ENCODE measurements at regions of chr10 and their contacts with region 1.

Region 1: DNA sequence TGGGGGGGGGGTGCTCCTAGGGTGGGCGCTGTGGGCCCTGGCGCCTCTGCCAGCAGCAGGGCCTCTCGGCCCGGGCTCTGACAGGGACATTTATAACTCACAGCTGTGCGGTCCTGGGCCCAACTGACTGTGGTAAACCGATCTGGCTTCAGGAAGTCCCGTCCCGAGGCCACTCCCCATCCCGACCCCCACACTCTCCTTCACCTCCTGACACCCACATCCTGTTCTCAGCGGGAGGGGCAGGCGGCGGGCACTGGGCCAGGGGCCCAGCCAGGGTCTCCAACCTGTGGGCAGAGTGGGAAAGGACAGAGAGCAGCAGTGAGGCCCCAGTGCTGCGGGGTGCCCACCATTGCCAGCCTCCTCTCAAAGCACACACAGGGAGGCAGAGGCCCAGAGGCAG is 69.1 kb downstream of the ZMIZ1 start:
- DNase-seq: peak; percentile 86 to 98 (median 97)
- H3K4me3 ChIP-seq: peak overlapping the region in 4 of 7 experiments; percentile 50 to 68 (median 58)
- H3K27ac ChIP-seq: peak overlapping the region; percentile 85 to 90
- H3K4me1 ChIP-seq: peaks cover 21 to 100% (median 99%) of the 10 kb centered on the region in 4 experiments
- H3K27me3 ChIP-seq: no peaks in the 10 kb centered on the region

Region 2: DNA sequence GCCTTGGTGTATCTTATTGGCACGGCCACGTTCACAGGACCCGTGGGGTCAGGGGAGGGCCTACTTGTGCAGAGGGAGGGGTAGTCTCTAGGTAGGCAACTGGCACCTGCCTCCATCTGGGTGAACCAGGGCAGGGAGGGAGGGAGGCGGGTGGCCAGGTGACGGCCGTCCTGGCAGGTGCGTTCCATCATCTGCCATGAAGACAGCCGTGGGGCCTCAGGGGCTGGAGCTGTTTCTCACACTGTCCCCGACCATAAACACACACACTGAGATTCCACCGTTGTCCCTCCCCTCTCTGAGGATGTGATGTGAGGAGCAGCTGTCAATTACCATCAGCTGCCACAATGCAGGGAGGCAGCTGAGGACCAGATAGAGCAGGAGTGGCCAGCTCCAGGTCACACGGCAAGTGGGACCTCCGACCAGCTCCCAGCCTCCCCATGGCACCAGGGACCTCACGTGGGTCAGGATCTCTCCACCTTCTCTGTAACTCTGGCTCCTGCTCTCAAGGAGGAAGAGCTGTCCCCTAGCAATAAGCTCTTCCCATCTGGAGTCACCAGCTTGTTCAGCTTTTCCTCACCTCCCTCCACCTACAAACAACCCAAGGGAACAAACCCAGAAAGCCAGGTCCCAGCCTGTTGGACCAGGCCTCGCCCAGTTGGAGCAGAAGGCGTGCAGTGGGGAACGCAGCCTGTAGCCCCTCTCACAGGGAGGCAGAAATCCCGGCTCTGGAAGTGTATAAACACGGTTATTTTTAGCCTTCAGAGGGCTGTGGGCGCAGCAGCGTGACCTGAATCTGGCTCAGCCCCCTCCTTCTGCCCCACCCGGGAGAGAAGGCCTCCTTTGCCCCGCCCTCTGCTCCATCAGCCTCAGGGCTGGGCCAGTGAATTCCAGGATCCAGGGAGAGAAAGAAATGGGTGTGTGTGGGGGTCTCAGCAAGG is 36.0 kb before region 1 on chr10:
- CTCF ChIA-PET with region 1: interaction called, 10 read pairs
- POLR2A ChIA-PET with region 1: interaction called, 3 read pairs
- DNase-seq: peak in 2 of 3 donors; percentile 48 to 61
- H3K4me3 ChIP-seq: peak overlapping the region in 3 of 7 experiments; percentile 38 to 47 (median 38)
- H3K27ac ChIP-seq: peak overlapping the region; percentile 28 to 74
- H3K4me1 ChIP-seq: peaks cover 14 to 100% (median 99%) of the 10 kb centered on the region in 4 experiments
- H3K27me3 ChIP-seq: no peaks in the 10 kb centered on the region

Region 3: DNA sequence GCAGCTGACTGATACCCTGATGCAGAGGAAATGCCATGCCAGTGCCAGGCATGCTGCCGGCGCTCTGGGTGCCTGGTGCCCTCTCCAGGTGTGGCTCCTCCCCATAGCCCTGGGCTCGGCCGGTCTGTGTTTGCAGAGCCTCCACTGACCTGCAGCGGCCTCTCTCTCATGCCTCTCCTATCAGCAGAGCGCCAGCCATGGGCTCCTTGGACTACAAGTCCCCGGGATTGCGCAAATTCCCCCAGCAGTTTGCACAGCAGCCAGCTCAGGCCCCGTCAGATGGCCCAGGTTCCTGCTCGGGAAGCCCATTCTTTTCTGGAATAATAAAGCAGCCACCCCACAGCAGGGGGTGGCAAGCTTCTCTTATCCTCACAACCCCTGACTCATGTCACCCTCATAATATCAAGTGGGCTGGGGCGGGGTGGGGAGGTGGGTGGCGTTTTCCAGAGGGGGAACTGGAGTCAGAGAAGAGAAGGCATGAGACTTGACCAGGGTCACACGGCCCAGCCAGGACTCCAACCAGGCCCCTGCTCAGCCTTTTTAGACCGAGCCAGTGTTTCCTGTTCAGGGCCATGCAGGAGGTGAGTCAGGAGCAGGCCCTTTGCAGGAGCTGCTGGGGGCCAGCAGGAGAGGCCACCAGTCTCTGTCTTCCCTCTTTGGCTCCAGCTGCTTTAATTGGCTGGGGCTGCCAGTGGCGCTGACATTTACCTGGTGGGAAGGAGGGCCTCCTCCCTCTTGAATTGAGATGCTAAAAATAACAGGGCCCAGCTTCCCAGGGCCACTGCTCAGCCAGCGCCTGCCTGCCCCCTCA is 10.5 kb before region 1 on chr10:
- CTCF ChIA-PET with region 1: interaction called, 39 read pairs
- POLR2A ChIA-PET with region 1: interaction called, 5 read pairs
- DNase-seq: peak in 1 of 3 donors; percentile 40
- H3K4me3 ChIP-seq: no peak overlapping the region
- H3K27ac ChIP-seq: peak overlapping the region in 1 of 2 experiments; percentile 46
- H3K4me1 ChIP-seq: peaks cover 13 to 95% (median 78%) of the 10 kb centered on the region in 4 experiments
- H3K27me3 ChIP-seq: no peaks in the 10 kb centered on the region

Region 4: DNA sequence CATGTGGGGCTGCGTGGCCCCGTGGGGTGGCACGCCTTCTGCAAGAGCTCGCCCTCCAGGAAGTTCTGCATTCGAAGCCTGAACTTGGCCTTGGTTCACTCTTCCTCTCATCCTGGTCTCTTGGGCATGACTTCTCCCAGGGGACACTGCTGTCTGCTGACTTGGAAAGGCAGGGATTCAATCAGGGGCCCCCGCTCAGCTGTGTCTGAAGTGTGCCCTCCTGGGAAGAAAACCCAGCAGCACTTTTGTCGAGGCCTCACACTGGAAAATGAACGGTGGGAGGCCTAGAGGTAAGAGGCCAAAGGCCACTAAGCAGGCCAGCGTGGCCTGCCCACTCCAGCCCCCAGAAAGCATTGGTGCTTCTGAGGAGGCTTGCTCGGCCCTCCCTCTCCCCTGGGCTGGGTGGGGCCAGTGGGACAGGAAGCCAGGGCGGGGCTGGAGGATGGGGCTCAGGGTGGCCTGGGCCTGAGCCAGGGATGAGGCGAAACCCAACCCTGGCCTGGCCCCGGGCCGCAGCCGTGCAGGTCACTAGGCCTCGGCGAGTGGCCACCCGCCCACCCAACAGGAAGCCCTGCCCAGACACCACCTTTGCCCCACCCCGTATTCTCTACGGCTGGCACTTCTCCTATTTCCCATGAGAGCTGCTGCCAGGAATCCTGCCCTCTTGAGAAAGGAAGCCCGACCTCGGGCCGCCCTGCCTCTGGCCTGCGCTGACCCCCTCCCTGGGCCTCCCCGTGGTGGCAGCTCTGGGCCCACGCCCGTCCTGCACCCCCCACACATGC is 12.0 kb after region 1 on chr10:
- CTCF ChIA-PET with region 1: interaction called, 14 read pairs
- POLR2A ChIA-PET with region 1: interaction called, 11 read pairs
- DNase-seq: peak in 1 of 3 donors; percentile 42
- H3K4me3 ChIP-seq: peak overlapping the region in 1 of 7 experiments; percentile 6
- H3K27ac ChIP-seq: peak overlapping the region; percentile 64 to 80
- H3K4me1 ChIP-seq: peaks cover 10 to 91% (median 78%) of the 10 kb centered on the region in 4 experiments
- H3K27me3 ChIP-seq: no peaks in the 10 kb centered on the region

Region 5: DNA sequence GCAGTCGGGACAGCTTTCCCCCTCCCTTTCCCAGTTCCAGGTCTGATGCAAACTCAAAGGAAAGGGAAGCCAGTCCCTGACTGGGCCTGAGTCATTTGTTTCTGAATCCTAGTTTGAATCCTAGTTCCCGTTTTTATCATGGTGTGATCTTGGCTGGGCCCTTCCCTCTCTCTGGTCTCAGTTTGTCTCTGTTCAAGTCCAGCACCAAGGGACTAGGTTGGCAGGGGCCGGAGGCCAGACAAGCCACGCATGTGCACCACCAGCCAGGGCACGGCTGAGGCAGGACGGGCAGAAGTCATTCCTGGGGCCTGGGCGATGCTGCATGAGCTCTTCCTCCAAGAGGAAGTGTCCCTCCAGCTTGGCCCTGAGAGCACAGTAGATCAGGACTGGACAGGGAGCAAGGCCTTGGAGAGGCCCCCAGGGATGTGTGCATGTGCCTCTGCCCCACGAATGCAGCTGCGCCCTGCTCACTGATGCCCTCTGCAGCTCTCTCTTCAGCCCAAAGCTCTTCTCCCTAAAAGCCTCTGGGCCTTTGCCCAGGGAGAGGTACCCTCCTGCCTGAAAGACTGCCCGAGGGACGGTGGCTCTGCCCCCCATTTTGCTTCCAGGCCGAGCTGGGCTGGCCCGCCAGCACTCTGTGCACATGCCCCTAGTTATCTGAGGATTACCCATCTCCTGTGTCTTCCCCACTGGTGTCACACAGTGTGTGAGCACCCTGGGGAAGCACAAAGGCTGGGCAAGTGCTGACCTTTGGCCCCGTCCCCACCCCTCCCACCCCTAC is 17.7 kb after region 1 on chr10:
- CTCF ChIA-PET with region 1: interaction called, 17 read pairs
- POLR2A ChIA-PET with region 1: interaction called, 11 read pairs
- DNase-seq: no peak
- H3K4me3 ChIP-seq: no peak overlapping the region
- H3K27ac ChIP-seq: peak overlapping the region; percentile 9 to 80
- H3K4me1 ChIP-seq: peaks cover 0 to 89% (median 45%) of the 10 kb centered on the region in 4 experiments
- H3K27me3 ChIP-seq: no peaks in the 10 kb centered on the region

Region 6: DNA sequence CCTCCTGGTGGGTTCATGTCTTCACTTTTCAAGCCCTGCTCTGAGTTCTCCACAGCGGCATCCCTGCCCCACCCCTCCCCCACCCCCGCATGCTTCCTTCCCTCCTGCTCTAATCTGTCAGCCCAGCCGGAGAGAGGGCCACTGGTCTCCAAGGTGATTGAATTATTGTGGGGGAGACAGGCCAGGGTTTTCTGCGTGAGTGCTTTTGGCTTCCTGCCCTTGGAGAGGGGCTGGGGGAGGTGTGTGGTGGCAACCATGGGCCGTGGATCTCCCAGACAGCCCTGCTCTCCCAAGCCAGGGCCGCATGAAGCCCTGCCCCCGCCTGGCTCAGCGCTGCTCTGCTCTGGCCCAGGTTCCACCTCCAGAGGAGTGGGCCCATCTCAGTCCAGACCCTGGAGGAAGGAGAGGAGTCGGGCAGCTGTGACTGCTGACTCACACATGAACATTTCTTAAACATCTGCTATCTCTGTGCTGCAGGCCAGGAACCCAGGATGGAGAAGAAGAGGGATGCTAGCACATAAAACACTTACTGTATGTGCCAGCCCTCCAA is 40.9 kb after region 1 on chr10:
- CTCF ChIA-PET with region 1: interaction called, 517 read pairs
- POLR2A ChIA-PET with region 1: interaction called, 33 read pairs
- DNase-seq: peak; percentile 95 to 99 (median 99)
- H3K4me3 ChIP-seq: peak overlapping the region in 3 of 7 experiments; percentile 16 to 61 (median 47)
- H3K27ac ChIP-seq: peak overlapping the region; percentile 73 to 91
- H3K4me1 ChIP-seq: peaks cover 4 to 100% (median 98%) of the 10 kb centered on the region in 4 experiments
- H3K27me3 ChIP-seq: no peaks in the 10 kb centered on the region